ENCODE measurements at regions of chr22 and their contacts with region 1.

Region 1: DNA sequence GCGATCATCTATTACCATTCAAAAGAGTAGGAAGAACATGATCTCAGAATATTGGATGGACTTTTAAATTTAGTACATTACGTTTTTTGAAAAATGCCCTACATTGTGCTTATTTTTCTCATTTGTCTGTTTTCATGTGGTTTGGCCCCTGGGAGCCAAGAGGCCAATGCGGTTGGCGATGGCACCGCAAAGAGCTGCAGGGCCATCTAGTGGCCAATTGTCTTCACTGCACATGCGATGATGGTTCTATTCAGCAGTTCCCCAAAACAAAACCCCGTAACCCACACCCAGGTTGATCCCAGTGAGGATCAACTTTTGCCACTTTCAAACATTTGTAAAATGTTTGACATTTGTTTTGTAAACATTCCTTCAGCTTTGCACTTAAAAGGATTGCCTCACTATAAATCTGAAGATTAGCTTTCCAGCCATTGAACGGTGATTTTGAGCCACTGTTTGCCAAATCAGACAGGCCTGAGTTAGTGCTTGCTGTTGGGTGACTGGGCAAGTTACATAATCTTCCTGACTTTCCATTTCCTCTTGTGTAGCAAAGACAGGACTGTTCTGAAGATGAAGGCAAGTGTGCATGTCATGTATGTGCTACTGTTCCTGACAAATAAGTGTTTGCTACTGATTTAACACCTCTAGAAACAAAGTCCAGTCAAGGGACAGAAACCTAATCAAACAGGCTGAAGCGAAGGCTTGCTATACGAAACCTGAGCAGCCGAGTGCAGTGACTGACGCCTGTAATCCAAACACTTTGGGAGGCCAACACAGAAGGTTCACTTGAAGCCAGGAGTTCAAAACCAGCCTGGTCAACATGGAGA is 29.2 kb upstream of the XBP1 start:
- DNase-seq: peak; percentile 70
- H3K4me3 ChIP-seq: no peak overlapping the region
- H3K27ac ChIP-seq: no peak overlapping the region
- H3K4me1 ChIP-seq: peaks cover 11% of the 10 kb centered on the region
- H3K27me3 ChIP-seq: no peaks in the 10 kb centered on the region
- CTCF ChIP-seq: peak; percentile 99

Region 2: GRCh38 chr22:28600546-28601143 is 228.9 kb before region 1 on chr22:
- intact Hi-C with region 1: loop called (anchors 5 kb)
- DNase-seq: no peak
- H3K4me3 ChIP-seq: no peak overlapping the region
- H3K27ac ChIP-seq: no peak overlapping the region
- H3K4me1 ChIP-seq: no peaks in the 10 kb centered on the region
- H3K27me3 ChIP-seq: no peaks in the 10 kb centered on the region
- CTCF ChIP-seq: peak; percentile 64

Measured in left ventricle myocardium inferior (tissue), 1 donor.